HCT116 (cell line): ENCODE measurements at regions of chr18 and their contacts with region 1.

Region 1: GRCh38 chr18:7946734-7947377 is 379.7 kb downstream of the PTPRM start:
- DNase-seq: peak; percentile 61
- ATAC-seq: peak; percentile 78
- H3K4me3 ChIP-seq: peak overlapping the region; percentile 51 to 66
- H3K27ac ChIP-seq: peak overlapping the region; percentile 43; the same call in 1 of the 2 replicates
- H3K4me1 ChIP-seq: peaks cover 25 to 45% of the 10 kb centered on the region in 2 experiments
- H3K27me3 ChIP-seq: no peaks in the 10 kb centered on the region
- CTCF ChIP-seq: no peak
- POLR2A ChIP-seq: peak; percentile 27
- RAD21 ChIP-seq: no peak

Region 2: GRCh38 chr18:7921938-7922587 is 24.8 kb before region 1 on chr18:
- CTCF ChIA-PET with region 1: no interaction called
- POLR2A ChIA-PET with region 1: no interaction called
- RAD21 ChIA-PET with region 1: no interaction called
- intact Hi-C with region 1: loop called (anchors 2 kb)
- DNase-seq: peak; percentile 54
- ATAC-seq: peak; percentile 57
- H3K4me3 ChIP-seq: peak overlapping the region; percentile 18 to 44
- H3K27ac ChIP-seq: peak overlapping the region; percentile 82
- H3K4me1 ChIP-seq: peaks cover 26 to 50% of the 10 kb centered on the region in 2 experiments
- H3K27me3 ChIP-seq: no peaks in the 10 kb centered on the region
- CTCF ChIP-seq: no peak
- POLR2A ChIP-seq: no peak
- RAD21 ChIP-seq: no peak; the same call in 1 of the 2 replicates